Dorsolateral prefrontal cortex (tissue), 120 donors: ENCODE measurements at regions of chr10 and their contacts with region 1.

Region 1: DNA sequence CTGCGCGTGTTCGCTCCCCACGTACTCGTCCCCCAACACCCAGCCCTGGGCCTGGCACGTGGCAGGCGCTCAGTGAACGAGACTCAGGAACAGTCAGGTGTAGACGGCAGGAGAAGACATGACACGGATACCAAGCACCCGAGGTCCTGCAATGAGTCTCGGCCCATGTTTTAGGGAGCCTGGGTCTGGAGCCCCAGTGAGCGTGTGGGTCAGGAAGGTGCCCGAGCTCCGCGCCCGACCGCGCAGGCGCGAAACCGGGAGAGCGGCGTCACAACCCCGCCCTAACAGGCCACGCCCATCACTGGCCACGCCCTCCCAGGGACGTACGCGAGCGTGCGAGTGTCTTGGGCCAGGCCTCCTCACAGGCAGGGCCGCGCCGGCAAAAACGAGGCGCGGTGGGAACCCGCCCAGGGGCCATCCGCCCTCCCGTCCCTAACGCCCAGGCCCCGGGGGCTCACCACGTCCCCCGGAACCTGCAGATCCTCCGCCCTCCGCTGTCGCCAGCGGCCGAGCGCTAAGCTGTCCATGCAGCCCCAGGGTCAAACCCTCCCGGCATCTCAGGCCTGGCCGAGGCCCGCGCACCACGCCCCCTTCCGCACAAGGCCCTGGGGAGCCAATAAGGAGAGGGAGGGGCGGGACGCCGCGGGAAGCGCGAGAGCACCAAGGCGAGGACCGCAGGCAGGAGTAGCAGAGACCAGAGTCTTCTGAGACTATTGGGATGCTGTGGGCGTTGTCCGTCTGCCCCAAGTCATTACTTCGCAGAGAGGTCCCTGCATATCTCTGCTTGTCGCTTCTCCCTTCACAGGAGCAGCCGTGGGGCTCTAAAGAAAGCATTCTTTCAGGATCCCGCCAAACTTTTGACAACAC is at the start of gene C10orf143:
- DNase-seq: peak; percentile 95 to 99 (median 98)
- H3K4me3 ChIP-seq: peak within 1 kb of the TSS; percentile 69 to 100 (median 89)
- H3K27ac ChIP-seq: peak within 1 kb of the TSS; percentile 73 to 99 (median 95)
- H3K27me3 ChIP-seq: no peaks in the 10 kb centered on the region
- CTCF ChIP-seq: peak in 14 of 56 donors; percentile 3 to 37 (median 8)
- total RNA-seq, gene C10orf143: 1.8 to 9.0 (median 5.0) TPM

Region 2: GRCh38 chr10:129472696-129473555 is 637.6 kb before region 1 on chr10:
- intact Hi-C with region 1: loop called in 1 of 2 experiments (anchors 10 kb)
- DNase-seq: no peak
- H3K4me3 ChIP-seq: no peak overlapping the region
- H3K27ac ChIP-seq: no peak overlapping the region
- H3K27me3 ChIP-seq: no peaks in the 10 kb centered on the region
- CTCF ChIP-seq: no peak

Region 3: GRCh38 chr10:130079614-130080460 is 30.6 kb before region 1 on chr10:
- intact Hi-C with region 1: no loop called
- DNase-seq: no peak
- H3K4me3 ChIP-seq: no peak overlapping the region
- H3K27ac ChIP-seq: no peak overlapping the region
- H3K27me3 ChIP-seq: no peaks in the 10 kb centered on the region
- CTCF ChIP-seq: no peak

Region 4: DNA sequence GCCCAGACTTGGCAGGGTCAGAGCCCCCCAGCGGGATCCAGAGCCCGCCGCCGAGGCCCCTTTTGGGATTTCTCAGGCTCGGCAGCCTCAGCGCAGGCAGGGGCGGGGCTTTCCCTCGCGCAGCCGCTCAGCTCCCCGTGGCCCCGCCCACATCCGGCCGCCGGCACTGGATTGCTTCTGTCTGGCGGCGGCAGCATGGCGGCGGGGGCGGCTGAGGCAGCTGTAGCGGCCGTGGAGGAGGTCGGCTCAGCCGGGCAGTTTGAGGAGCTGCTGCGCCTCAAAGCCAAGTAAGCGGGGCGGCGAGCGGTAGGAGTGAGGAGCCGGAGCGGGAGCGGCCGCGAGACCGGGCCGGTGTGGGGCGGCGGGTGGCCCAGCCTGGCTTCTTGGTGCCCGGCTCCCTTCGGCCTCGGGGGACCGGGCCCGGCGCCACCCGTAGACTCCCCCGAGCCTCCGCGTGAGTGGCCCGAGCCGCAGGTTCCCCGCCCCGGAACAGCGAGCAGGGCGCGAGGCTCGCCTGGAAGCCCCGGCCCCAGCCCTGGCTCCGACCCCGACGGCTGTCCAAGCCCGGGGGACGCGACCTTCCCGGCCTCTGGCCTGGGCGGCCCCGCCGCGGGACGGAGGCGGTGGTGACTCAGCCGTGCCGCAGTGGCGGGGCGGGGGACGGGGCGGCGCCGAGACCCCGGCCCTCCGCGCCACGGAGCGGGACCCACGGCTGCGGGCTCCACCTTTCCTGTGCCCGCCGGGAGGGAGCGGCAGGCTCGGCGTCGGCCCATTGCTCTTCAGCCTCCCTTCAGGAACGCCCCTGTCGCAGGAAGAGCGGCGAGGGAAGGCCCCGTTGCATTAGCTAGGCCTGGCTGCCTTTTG is 26.0 kb after region 1 on chr10 and contains the start of gene GLRX3:
- intact Hi-C with region 1: loop called (anchors 1 kb)
- DNase-seq: peak; percentile 65 to 92 (median 83)
- H3K4me3 ChIP-seq: peak within 1 kb of the TSS; percentile 66 to 100 (median 95)
- H3K27ac ChIP-seq: peak within 1 kb of the TSS in 51 of 59 donors; percentile 15 to 93 (median 72)
- H3K27me3 ChIP-seq: no peaks in the 10 kb centered on the region
- CTCF ChIP-seq: peak in 40 of 56 donors; percentile 7 to 58 (median 32)
- total RNA-seq, gene GLRX3: 29.9 to 60.2 (median 46.6) TPM